Heart right ventricle (tissue), 16 donors: ENCODE measurements at regions of chr6 and their contacts with region 1.

Region 1: DNA sequence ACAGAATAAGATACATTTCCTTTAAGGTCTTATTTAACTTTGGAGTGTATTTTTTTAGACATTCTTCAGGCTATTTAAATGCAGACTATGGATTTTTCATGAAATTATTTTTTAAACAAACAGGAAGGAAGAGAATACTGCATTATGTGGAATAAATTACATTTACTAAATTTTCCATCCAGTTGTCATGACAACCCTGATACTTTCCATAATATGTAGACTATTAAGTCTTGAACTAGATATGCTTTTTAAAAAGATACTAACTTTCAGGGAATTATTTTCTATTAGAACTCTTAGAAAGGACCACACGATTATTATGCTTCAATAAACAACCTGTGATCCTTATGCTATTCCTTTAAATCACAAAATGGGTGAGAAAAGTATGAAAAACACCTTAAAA is 942.5 kb upstream of the EYS start:
- DNase-seq: no peak
- ATAC-seq: no peak
- H3K4me3 ChIP-seq: no peak overlapping the region
- H3K27ac ChIP-seq: no peak overlapping the region
- H3K4me1 ChIP-seq: no peaks in the 10 kb centered on the region
- H3K27me3 ChIP-seq: no peaks in the 10 kb centered on the region
- CTCF ChIP-seq: no peak

Region 2: GRCh38 chr6:66068033-66068432 is 581.5 kb before region 1 on chr6:
- intact Hi-C with region 1: no loop called
- DNase-seq: no peak
- ATAC-seq: no peak
- H3K4me3 ChIP-seq: no peak overlapping the region
- H3K27ac ChIP-seq: no peak overlapping the region
- H3K4me1 ChIP-seq: no peaks in the 10 kb centered on the region
- H3K27me3 ChIP-seq: no peaks in the 10 kb centered on the region
- CTCF ChIP-seq: no peak

Region 3: GRCh38 chr6:66699385-66699784 is 49.8 kb after region 1 on chr6:
- intact Hi-C with region 1: loop called in 1 of 10 experiments (anchors 1 kb)
- DNase-seq: no peak
- ATAC-seq: no peak
- H3K4me3 ChIP-seq: no peak overlapping the region
- H3K27ac ChIP-seq: no peak overlapping the region
- H3K4me1 ChIP-seq: no peaks in the 10 kb centered on the region
- H3K27me3 ChIP-seq: no peaks in the 10 kb centered on the region
- CTCF ChIP-seq: no peak

Region 4: GRCh38 chr6:66986928-66987327 is 337.4 kb after region 1 on chr6:
- intact Hi-C with region 1: no loop called
- DNase-seq: no peak
- ATAC-seq: no peak
- H3K4me3 ChIP-seq: no peak overlapping the region
- H3K27ac ChIP-seq: no peak overlapping the region
- H3K4me1 ChIP-seq: no peaks in the 10 kb centered on the region
- H3K27me3 ChIP-seq: no peaks in the 10 kb centered on the region
- CTCF ChIP-seq: no peak